HAP-1 (cell line): ENCODE measurements at regions of chr2 and their contacts with region 1.

Region 1: GRCh38 chr2:172172513-172173173 is 69.9 kb upstream of the DLX2 start:
- DNase-seq: peak; percentile 58 to 88
- H3K4me3 ChIP-seq: peak overlapping the region; percentile 44
- H3K4me1 ChIP-seq: peaks cover 4% of the 10 kb centered on the region; the same call in 1 of the 2 replicates
- H3K27me3 ChIP-seq: no peaks in the 10 kb centered on the region

Region 2: DNA sequence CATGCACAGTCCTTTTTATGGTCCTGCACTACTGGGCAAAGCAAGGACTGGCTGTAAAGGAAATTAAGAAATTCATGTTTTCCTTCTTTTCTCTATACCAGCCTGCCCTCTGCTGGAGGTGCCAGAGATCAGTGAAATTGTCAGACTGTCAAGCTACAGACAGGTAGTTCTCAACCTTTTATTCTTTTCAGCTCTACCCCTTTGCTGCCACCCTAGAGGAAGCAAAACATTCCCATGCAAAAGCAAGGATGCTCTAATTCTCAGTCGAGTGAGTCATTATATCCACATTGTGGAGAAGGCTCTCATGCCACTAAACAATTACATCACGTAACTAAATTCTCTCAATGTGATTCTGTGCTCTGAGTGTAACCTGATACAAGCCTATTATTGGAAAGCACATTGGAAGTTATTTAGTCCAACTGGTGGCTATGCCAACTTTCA is 538.0 kb after region 1 on chr2:
- in situ Hi-C with region 1: loop called (anchors 10 kb)
- DNase-seq: peak; percentile 46 to 61
- H3K4me3 ChIP-seq: no peak overlapping the region
- H3K4me1 ChIP-seq: no peaks in the 10 kb centered on the region
- H3K27me3 ChIP-seq: peaks cover 11% of the 10 kb centered on the region; the same call in 1 of the 2 replicates